Activated CD4-positive, alpha-beta T cell treated with anti-CD3 and anti-CD28 coated beads for 36 hours (primary cell): ENCODE measurements at regions of chr6 and their contacts with region 1.

Region 1: DNA sequence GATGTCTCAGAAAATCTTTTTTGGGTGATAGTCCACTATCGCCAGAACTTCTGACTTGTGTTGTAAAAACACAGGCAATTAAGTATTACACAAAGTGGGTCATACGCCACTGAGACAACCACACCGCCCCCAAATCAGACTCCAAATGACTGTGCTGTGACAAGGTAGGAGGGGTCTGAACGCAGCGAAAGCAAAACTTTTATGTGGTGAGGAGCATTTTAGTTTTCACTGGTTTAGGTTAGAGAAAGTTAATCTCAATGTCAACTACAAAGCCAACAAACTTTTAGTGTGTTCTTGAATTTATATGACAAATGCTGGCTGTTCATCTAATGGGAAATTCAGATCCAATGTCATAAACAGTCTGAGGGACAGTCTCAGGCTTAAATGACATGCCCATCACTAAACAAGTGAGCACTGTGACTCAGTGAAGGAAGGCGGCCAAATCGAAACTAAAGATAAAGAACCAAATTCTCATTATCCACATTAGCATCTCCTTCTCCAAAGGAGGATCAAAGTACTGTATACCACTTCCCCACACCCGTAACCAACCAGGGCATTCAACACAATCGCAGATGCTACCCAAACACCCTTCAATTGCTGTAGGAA is 186.7 kb downstream of the GJA10 start:
- DNase-seq: peak; percentile 92
- ATAC-seq: peak; percentile 62
- H3K4me3 Mint-ChIP-seq: peak overlapping the region; percentile 93
- H3K27ac Mint-ChIP-seq: peak overlapping the region; percentile 99
- H3K4me1 Mint-ChIP-seq: peaks cover 83% of the 10 kb centered on the region
- H3K27me3 Mint-ChIP-seq: no peaks in the 10 kb centered on the region

Region 2: GRCh38 chr6:89080542-89081422 is 1000.2 kb before region 1 on chr6 and contains the start of gene PNRC1:
- CTCF ChIA-PET with region 1: no interaction called
- POLR2A ChIA-PET with region 1: no interaction called
- intact Hi-C with region 1: loop called in 1 of 2 experiments (anchors 5 kb)
- DNase-seq: peak; percentile 100
- ATAC-seq: peak; percentile 72
- H3K4me3 Mint-ChIP-seq: peak within 1 kb of the TSS; percentile 94
- H3K27ac Mint-ChIP-seq: peak within 1 kb of the TSS; percentile 100
- H3K4me1 Mint-ChIP-seq: peaks cover 28% of the 10 kb centered on the region
- H3K27me3 Mint-ChIP-seq: no peaks in the 10 kb centered on the region
- total RNA-seq, gene PNRC1: 85.6 to 93.7 TPM

Region 3: GRCh38 chr6:89940225-89941027 is 140.6 kb before region 1 on chr6:
- CTCF ChIA-PET with region 1: no interaction called
- POLR2A ChIA-PET with region 1: no interaction called
- intact Hi-C with region 1: loop called in 1 of 2 experiments (anchors 2 kb)
- DNase-seq: peak; percentile 80
- ATAC-seq: peak; percentile 80
- H3K4me3 Mint-ChIP-seq: no peak overlapping the region
- H3K27ac Mint-ChIP-seq: peak overlapping the region; percentile 47
- H3K4me1 Mint-ChIP-seq: peaks cover 60% of the 10 kb centered on the region
- H3K27me3 Mint-ChIP-seq: no peaks in the 10 kb centered on the region

Region 4: GRCh38 chr6:90025523-90026061 is 55.4 kb before region 1 on chr6:
- CTCF ChIA-PET with region 1: interaction called, 5 read pairs
- POLR2A ChIA-PET with region 1: interaction called, 3 read pairs
- intact Hi-C with region 1: loop called (anchors 1 kb)
- DNase-seq: peak; percentile 77
- ATAC-seq: peak; percentile 93
- H3K4me3 Mint-ChIP-seq: peak overlapping the region; percentile 22
- H3K27ac Mint-ChIP-seq: peak overlapping the region; percentile 90
- H3K4me1 Mint-ChIP-seq: peaks cover 88% of the 10 kb centered on the region
- H3K27me3 Mint-ChIP-seq: no peaks in the 10 kb centered on the region

Region 5: DNA sequence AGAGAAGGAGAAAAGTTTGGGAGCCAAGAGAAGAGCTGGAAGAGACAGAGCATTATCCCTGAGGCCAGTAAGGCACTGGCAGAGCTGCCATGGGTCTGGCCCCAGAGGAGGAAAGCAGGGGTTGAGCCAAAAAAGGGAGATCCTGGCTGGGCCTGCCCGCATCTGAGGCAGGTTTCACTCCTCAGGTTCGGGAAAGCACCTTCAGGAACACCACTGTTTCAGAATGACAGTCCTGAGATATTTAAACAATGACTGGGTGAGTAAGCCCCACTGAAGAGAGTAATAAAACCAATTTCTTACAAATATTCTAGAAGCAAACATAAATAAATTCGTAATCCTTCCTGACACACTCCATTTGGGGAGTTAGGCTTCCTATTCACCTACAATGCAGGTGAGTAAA is 63.4 kb after region 1 on chr6:
- CTCF ChIA-PET with region 1: no interaction called
- POLR2A ChIA-PET with region 1: interaction called, 5 read pairs
- intact Hi-C with region 1: loop called (anchors 1 kb)
- DNase-seq: peak; percentile 75
- ATAC-seq: peak; percentile 75
- H3K4me3 Mint-ChIP-seq: peak overlapping the region; percentile 32
- H3K27ac Mint-ChIP-seq: peak overlapping the region; percentile 95
- H3K4me1 Mint-ChIP-seq: peaks cover 81% of the 10 kb centered on the region
- H3K27me3 Mint-ChIP-seq: no peaks in the 10 kb centered on the region

Region 6: DNA sequence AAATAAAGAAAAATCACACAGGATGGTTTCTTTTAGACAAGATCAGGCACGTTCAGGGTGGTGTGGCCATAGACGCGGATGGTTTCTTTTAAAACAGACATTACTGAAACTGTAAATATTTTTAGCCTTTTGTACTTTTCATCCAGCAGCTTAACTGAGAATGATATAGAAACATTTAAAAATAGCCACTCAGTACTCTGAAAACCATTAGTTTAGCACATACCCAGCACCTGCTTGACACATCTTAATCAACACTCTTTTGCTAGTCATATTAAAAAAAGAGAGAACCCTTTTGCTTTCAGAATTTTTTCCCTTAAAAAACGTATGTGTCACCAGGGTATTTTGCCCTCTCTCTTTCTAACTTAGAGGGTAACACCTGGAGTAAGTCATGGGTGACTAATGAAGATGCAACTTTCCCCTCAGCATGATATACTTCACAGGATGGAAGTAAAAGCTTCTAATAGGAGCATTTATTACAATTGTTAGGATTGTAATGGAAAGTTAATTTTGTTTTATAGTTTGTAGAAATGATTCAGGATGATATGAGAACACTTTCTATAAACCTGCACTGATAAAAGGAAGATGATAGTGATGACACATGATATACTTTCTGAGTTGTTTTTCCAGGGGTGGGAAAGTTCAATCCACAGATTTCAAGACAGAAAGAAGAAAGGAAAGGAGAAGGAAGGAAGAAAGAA is 170.5 kb after region 1 on chr6:
- CTCF ChIA-PET with region 1: no interaction called
- POLR2A ChIA-PET with region 1: interaction called, 4 read pairs
- intact Hi-C with region 1: loop called (anchors 1 kb)
- DNase-seq: no peak
- ATAC-seq: peak; percentile 72
- H3K4me3 Mint-ChIP-seq: peak overlapping the region; percentile 26
- H3K27ac Mint-ChIP-seq: peak overlapping the region; percentile 97
- H3K4me1 Mint-ChIP-seq: peaks cover 89% of the 10 kb centered on the region
- H3K27me3 Mint-ChIP-seq: no peaks in the 10 kb centered on the region

Region 7: DNA sequence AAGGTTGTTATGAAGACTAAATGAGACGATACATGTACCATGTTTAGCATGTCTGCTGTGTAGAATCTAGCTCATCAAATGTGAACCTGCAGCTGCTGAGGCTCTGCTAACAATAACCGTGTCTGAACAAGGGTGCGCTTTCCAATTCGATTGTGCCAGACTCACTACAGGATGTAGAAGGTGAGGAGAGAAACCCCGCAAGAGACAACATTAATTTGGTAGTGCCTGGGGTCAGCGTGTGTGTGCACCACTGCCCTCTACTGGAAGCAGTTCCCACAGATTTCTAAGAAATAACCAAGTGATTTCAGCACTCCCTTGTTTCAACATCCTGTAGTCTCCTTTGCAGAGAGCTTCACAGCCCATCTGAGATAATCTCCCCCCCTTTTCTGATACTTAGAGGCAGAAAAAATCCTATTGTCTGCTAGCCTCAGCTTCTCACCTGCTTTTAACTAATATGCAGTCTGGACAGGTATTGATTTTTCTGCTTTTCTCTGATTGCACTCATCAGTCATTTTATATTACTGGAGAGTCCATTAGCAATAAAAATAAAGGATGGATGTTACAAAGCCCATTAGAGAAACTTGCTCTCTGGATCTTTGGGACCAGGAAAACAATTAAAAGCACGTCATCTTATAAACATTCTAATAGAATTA is 312.4 kb after region 1 on chr6:
- CTCF ChIA-PET with region 1: interaction called, 3 read pairs
- POLR2A ChIA-PET with region 1: no interaction called
- intact Hi-C with region 1: loop called (anchors 1 to 2 kb)
- DNase-seq: peak; percentile 87
- ATAC-seq: peak; percentile 41
- H3K4me3 Mint-ChIP-seq: no peak overlapping the region
- H3K27ac Mint-ChIP-seq: peak overlapping the region; percentile 65
- H3K4me1 Mint-ChIP-seq: peaks cover 76% of the 10 kb centered on the region
- H3K27me3 Mint-ChIP-seq: no peaks in the 10 kb centered on the region